ENCODE measurements at regions of chrX and their contacts with region 1.

Region 1: DNA sequence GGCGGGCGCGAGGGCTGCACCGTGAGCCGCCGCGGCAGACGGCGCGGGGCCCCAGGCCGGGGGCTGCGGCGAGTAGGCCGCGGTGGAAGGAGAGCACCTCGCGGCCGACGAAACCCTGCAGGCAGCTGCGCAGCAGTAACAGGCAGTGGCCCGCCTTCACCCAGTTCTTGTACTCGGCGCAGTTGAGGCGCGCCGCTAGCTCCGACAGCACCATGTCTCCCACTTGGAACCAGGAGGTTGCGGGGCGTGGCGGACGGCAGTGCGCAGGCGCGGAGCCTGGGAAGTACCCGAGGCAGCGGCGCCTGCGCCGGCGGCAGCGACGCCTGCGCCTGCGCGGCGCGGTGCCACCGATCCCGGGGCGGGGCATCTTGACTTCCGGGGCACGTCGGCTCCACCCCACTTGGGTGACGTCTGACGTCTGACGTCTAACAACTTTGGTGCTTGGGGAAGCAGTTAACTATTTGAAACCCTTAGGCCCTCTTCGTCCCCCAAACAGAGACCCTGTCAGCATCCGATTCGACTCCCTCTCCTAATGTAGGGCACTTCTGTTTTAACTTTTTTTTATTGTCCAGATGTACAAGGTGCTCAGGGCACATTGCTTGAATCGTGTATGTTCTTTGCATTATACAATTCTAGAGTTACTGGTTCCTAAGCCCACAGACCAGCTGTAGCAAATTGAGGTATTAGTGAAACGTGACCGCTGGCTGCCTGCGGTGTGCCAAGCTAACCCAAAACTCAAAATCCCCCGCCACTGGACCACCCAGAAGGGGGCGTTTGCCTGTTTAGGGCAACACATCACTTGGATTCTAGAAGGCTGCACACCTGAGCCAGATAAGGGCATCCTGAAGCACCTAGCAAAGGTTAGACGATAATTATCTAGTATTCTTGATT is at the start of gene CXorf38:
- DNase-seq: peak; percentile 95 to 98
- ATAC-seq: peak; percentile 88 to 93 (median 90)
- H3K4me3 ChIP-seq: peak within 1 kb of the TSS; percentile 80
- H3K27ac ChIP-seq: peak within 1 kb of the TSS; percentile 81
- H3K4me1 ChIP-seq: peaks cover 20% of the 10 kb centered on the region
- H3K27me3 ChIP-seq: no peaks in the 10 kb centered on the region
- CTCF ChIP-seq: no peak
- total RNA-seq, gene CXorf38: 3.1 to 3.9 (median 3.7) TPM

Region 2: DNA sequence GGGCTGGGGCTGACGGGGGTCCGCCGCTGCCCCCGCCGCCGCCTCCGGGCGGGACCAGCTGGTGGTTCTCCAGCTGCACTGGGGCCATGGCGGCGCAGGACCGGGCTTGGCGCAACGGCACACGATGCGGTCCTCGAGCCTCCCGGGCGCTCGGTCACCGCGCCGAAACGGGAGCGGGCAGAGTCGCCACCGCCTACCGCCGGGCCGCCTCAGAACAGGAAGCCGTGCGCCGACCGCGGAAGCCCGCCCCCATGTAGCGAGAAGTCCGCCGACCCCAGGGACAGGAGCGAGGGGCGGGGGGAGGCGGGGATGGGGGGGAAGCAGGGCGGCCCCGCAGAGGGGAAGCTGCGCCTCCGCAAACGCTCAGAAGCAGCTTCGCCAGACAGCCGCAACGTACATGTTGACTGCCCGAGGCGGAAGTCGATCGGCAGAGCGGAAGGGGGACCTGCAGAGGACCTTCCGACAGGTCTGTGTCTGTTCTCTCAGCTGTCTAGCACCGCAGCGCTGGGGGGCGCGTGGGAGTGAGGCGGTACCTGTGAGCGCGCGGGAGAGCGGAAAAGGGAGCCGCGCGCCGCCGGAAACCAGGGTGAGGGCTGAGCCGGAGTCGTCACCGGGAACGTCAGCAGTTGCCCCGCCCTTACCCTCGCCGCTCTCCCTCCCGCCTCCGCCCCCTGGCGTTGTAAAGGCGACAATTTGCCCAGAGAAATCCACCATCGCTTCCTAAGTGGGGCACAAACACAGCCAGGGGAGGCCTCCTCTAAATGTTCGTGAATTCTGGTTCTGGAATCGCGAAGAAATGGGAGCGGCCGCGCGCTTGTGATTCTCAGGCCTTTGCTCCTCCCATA is 88.0 kb after region 1 on chrX and contains the start of gene MED14:
- intact Hi-C with region 1: loop called in 1 of 2 experiments (anchors 5 kb)
- DNase-seq: peak; percentile 91 to 95
- ATAC-seq: peak; percentile 96 to 97 (median 97)
- H3K4me3 ChIP-seq: peak within 1 kb of the TSS; percentile 91
- H3K27ac ChIP-seq: peak within 1 kb of the TSS; percentile 99
- H3K4me1 ChIP-seq: peaks cover 5% of the 10 kb centered on the region
- H3K27me3 ChIP-seq: peaks cover 0 to 6% (median 0%) of the 10 kb centered on the region in 3 donors
- CTCF ChIP-seq: peak; percentile 52
- total RNA-seq, gene MED14: 46.6 to 63.2 (median 55.9) TPM

Region 3: GRCh38 chrX:40773809-40774208 is 126.3 kb after region 1 on chrX:
- intact Hi-C with region 1: no loop called
- DNase-seq: no peak
- ATAC-seq: peak in 1 of 4 donors; percentile 70
- H3K4me3 ChIP-seq: no peak overlapping the region
- H3K27ac ChIP-seq: no peak overlapping the region
- H3K4me1 ChIP-seq: no peaks in the 10 kb centered on the region
- H3K27me3 ChIP-seq: peaks cover 0 to 3% (median 0%) of the 10 kb centered on the region in 3 donors
- CTCF ChIP-seq: no peak

Region 4: GRCh38 chrX:40792433-40792832 is 144.9 kb after region 1 on chrX:
- intact Hi-C with region 1: loop called (anchors 2 to 5 kb)
- DNase-seq: no peak
- ATAC-seq: no peak
- H3K4me3 ChIP-seq: no peak overlapping the region
- H3K27ac ChIP-seq: no peak overlapping the region
- H3K4me1 ChIP-seq: peaks cover 4% of the 10 kb centered on the region
- H3K27me3 ChIP-seq: peaks cover 0 to 9% (median 0%) of the 10 kb centered on the region in 3 donors
- CTCF ChIP-seq: no peak

Region 5: DNA sequence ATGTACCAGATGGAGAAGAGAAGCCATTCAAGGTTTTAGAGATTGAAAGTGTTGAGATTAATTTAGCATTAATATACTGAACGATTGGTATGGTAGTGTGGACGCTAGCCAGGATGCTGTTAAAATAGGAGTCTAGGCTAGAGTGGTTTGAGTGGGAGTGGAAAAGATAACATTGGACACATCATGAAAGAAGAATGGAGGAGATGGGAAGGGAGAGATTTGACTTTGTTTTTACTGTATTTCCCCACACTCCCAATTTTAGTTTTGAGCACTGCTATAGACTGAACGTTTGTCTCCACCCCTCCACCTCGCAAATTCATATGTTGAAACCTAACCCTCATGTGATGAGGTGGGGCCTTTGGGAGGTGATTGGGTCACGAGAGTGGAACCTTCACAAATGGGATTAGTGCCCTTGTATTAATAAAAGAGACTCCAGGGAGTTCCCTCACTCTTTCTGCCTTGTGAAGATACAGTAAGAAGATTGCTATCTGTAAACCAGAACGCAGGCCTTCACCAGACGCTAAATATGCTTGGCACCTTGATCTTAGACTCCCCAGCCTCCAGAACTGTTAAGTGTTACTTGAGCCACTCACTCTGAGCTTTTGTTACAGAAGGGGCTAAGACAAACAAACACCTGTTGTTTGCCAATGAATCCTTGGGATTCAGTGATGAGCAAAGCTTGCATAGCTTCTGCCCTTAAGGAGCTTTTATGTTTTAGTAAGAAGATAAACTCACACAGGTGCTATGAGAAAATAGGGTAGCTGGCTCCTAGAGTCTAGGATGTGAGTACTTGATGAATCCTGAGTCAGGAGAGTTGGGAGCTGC is 463.5 kb after region 1 on chrX:
- intact Hi-C with region 1: loop called (anchors 5 kb)
- DNase-seq: no peak
- ATAC-seq: peak in 1 of 4 donors; percentile 17
- H3K4me3 ChIP-seq: no peak overlapping the region
- H3K27ac ChIP-seq: peak overlapping the region; percentile 43
- H3K4me1 ChIP-seq: peaks cover 43% of the 10 kb centered on the region
- H3K27me3 ChIP-seq: no peaks in the 10 kb centered on the region
- CTCF ChIP-seq: no peak

Region 6: GRCh38 chrX:41116948-41117347 is 469.4 kb after region 1 on chrX:
- intact Hi-C with region 1: loop called (anchors 5 kb)
- DNase-seq: no peak
- ATAC-seq: peak in 1 of 4 donors; percentile 18
- H3K4me3 ChIP-seq: no peak overlapping the region
- H3K27ac ChIP-seq: no peak overlapping the region
- H3K4me1 ChIP-seq: peaks cover 33% of the 10 kb centered on the region
- H3K27me3 ChIP-seq: no peaks in the 10 kb centered on the region
- CTCF ChIP-seq: no peak

Region 7: DNA sequence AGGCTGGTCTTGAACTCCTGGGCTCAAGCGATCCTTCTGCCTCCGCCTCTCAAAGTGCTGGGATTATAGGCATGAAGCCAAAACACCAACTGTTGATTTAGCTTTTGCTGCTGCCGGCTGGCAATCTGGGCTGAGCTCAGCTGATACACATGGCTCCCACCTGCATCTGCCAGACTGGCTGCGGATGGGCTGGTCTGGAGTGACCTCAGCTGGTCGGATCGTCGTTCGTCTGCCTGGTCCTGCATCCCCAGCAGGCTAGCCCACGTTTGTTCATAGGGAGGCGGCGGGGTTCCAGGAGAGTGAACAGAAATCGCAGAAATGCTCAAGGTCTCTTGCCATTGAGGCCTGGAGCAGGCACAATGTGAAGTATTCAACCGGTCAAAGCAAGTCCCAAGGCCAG is 612.0 kb after region 1 on chrX:
- intact Hi-C with region 1: loop called in 1 of 2 experiments (anchors 10 kb)
- DNase-seq: no peak
- ATAC-seq: no peak
- H3K4me3 ChIP-seq: no peak overlapping the region
- H3K27ac ChIP-seq: no peak overlapping the region
- H3K4me1 ChIP-seq: no peaks in the 10 kb centered on the region
- H3K27me3 ChIP-seq: peaks cover 0 to 14% (median 0%) of the 10 kb centered on the region in 3 donors
- CTCF ChIP-seq: no peak